Heart left ventricle (tissue), 16 donors: ENCODE measurements at regions of chr5 and their contacts with region 1.

Region 1: DNA sequence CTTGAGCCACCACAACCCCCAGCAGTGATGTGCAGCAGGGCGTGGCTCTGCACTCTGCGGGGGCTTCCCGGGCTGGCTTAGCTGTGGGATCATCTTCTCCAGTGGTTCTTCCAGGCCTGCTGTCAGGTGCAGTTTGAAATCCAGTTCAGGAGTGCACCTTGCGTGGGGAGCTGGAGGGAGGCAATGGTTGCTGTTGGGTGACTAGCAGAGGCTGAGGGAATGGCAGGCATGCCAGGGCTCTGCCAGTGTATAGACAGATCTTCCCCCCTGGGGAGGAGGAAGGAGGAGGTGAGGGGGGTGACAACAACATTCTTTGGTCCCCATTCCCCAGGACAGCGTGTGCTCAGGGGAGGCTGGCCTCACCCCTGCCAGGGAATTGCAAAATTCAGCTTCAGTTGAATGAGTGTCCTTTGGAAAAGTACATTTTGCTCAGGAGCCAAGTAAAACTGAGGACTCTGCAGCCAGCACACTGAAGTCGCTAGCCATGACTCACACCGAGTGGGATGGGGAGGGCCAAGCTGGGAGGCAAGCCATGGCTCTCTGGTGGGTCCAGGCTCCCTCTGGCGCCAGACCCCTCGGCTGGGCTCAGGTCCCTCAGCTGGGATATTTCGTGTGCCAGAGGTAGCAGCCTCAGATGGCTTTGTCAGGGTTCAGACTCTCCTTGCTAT is 35.0 kb downstream of the ERGIC1 start:
- DNase-seq: peak; percentile 79 to 91 (median 85)
- ATAC-seq: peak; percentile 61 to 79 (median 70)
- H3K4me3 ChIP-seq: no peak overlapping the region
- H3K27ac ChIP-seq: peak overlapping the region; percentile 83 to 99 (median 94)
- H3K4me1 ChIP-seq: peaks cover 39 to 95% (median 80%) of the 10 kb centered on the region in 12 donors
- H3K27me3 ChIP-seq: no peaks in the 10 kb centered on the region
- CTCF ChIP-seq: peak in 7 of 12 donors; percentile 19 to 42 (median 26)
- POLR2A ChIP-seq: peak in 1 of 2 donors; percentile 45

Region 2: DNA sequence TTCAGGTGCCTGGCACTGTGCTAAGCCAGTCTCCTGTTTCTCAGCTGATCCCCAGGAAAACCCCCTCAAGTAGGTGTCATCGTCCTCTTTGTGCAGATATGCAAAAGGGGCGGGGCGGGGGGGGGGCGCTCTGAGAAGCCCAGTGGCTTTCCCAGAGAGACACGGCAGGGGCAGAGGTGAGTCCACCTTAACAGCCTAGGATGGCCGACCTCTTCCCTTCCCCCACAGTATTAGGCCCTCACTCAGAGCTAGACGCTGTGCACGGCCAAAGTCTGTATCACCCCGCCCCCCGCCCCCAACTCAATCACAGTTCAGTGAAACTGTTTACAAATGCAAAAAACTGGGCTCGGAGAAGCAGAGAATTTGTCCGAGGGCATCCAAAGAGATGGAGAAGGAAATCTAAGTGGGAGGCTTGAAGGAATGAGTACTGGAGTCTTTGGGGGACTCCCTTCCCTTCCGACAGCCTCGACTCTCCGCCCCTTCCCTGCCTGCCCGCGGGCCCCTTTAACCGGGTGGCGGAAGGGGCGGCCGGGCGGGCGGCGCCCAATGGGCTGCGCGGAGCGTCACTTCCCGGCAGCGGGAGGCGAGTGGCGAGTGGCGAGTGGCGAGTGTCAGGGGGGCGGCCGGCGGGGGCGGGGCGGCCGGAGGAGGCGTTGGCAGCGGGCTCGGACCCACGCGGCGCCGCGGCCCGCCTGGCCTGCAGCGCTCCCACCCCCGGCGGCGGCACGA is 35.2 kb before region 1 on chr5 and contains the start of gene ERGIC1:
- intact Hi-C with region 1: loop called in 2 of 10 experiments (anchors 2 kb)
- DNase-seq: peak; percentile 88 to 95 (median 91)
- ATAC-seq: peak; percentile 80 to 94 (median 92)
- H3K4me3 ChIP-seq: peak within 1 kb of the TSS; percentile 74 to 97 (median 85)
- H3K27ac ChIP-seq: peak within 1 kb of the TSS; percentile 64 to 91 (median 84)
- H3K4me1 ChIP-seq: peaks cover 3 to 60% (median 22%) of the 10 kb centered on the region in 12 donors
- H3K27me3 ChIP-seq: no peaks in the 10 kb centered on the region
- CTCF ChIP-seq: peak in 1 of 12 donors; percentile 5
- POLR2A ChIP-seq: peak in 1 of 2 donors; percentile 73
- total RNA-seq, gene ERGIC1: 67.0 to 109 (median 84.9) TPM

Region 3: GRCh38 chr5:172891726-172892421 is 22.8 kb after region 1 on chr5:
- intact Hi-C with region 1: loop called in 1 of 10 experiments (anchors 2 kb)
- DNase-seq: peak; percentile 80 to 89 (median 85)
- ATAC-seq: peak; percentile 71 to 82 (median 78)
- H3K4me3 ChIP-seq: no peak overlapping the region
- H3K27ac ChIP-seq: peak overlapping the region; percentile 48 to 93 (median 84)
- H3K4me1 ChIP-seq: peaks cover 3 to 57% (median 44%) of the 10 kb centered on the region in 12 donors
- H3K27me3 ChIP-seq: no peaks in the 10 kb centered on the region
- CTCF ChIP-seq: no peak
- POLR2A ChIP-seq: no peak

Region 4: DNA sequence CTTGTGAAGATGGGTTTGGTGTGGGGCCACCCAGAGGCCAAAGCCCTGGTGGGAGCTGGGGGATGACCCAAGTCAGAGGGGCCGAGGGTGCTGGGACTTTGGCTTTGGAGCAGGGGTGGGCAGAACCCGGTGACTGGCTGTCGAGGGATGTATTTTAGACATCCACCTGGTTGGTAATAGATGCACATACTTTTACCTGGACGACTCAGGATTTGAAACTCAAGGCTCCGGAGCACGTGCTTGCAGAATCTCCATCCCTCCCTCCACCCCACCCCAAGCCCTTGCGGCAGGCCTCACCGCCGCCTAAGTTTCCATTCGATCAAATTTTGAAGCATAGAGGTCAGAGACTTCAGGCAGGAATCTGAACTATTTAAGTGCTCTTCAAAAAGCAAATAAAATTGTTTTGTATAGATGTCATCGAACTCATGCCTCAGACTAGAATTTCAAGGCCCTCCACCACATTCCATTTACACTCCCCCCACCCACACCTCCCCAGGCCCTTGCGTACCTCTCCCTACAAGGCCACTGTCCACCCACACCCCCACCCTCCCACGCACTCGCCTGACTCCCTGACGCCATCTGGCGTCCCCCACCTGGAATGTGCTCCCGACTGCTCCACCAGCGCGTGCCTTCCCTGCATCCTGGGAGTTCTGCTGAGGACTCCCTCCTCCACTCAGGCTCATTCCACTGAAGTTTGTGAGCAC is 33.6 kb after region 1 on chr5:
- intact Hi-C with region 1: loop called in 4 of 10 experiments (anchors 2 to 5 kb)
- DNase-seq: peak; percentile 81 to 87 (median 85)
- ATAC-seq: peak; percentile 48 to 72 (median 59)
- H3K4me3 ChIP-seq: no peak overlapping the region
- H3K27ac ChIP-seq: peak overlapping the region; percentile 28 to 96 (median 90)
- H3K4me1 ChIP-seq: peaks cover 2 to 82% (median 64%) of the 10 kb centered on the region in 12 donors
- H3K27me3 ChIP-seq: no peaks in the 10 kb centered on the region
- CTCF ChIP-seq: peak; percentile 18 to 71 (median 58)
- POLR2A ChIP-seq: no peak

Region 5: DNA sequence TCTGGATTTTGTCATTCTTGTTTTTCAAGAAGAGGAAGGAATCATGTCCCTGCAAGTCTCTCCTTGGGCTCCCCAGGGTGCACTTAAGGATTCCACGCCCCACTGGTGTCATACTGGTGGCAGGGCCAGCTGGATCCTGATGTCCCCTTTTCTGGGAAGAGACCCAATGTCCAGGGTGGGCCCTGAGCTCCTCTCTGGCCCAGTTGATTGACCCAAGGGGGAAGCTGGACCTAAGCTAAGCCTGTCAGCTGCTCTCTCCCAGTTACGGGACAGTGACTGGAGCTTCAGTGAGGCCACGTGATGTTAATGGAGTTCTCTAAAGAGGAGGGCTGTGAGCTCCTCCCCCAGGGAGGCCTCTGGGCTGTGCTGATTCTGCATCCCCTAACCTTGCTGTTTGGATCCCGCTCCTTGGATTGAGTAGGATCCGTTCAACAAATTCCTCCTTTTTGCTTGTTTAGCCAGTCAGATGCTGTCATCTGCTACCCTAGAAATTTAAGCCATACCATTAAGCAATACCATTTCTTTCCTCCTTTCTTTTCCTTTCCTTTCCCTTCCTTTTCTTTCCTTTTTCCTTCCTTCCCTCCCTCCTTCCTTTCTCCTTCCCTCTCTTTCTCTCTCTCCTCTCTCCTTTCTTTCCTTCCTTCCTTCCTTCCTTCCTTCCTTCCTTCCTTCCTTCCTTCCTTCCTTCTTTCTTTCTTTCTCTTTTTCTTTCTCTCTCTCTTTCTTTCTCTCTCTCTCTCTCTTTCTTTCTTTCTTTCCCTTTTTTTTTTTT is 348.8 kb after region 1 on chr5:
- intact Hi-C with region 1: no loop called
- DNase-seq: peak in 1 of 5 donors; percentile 56
- ATAC-seq: peak in 3 of 4 donors; percentile 42 to 54 (median 51)
- H3K4me3 ChIP-seq: no peak overlapping the region
- H3K27ac ChIP-seq: no peak overlapping the region
- H3K4me1 ChIP-seq: peaks cover 0 to 4% (median 0%) of the 10 kb centered on the region in 12 donors
- H3K27me3 ChIP-seq: peaks cover 0 to 9% (median 0%) of the 10 kb centered on the region in 9 donors
- CTCF ChIP-seq: no peak
- POLR2A ChIP-seq: no peak